Activated T-helper 1 cell treated with anti-CD3 and anti-CD28 coated beads, Interleukin-12 subunit alpha, Interleukin-12 subunit beta, Interleukin-2, Interleukin-4 antibody, amounts not matched to agents 30 ng/mL and 10 ng/mL and 1 ng/mL, durations not matched to agents 14 hours and 24 hours and 36 hours (primary cell): ENCODE measurements at regions of chr9 and their contacts with region 1.

Region 1: GRCh38 chr9:86354011-86354817 is at the start of gene TUT7:
- DNase-seq: peak; percentile 95
- H3K4me3 Mint-ChIP-seq: peak within 1 kb of the TSS; percentile 99
- H3K27ac Mint-ChIP-seq: peak within 1 kb of the TSS; percentile 100
- H3K4me1 Mint-ChIP-seq: peaks cover 41% of the 10 kb centered on the region
- H3K27me3 Mint-ChIP-seq: peaks cover 20% of the 10 kb centered on the region
- total RNA-seq, gene TUT7: 44.1 and 44.5 TPM in 2 replicates

Region 2: DNA sequence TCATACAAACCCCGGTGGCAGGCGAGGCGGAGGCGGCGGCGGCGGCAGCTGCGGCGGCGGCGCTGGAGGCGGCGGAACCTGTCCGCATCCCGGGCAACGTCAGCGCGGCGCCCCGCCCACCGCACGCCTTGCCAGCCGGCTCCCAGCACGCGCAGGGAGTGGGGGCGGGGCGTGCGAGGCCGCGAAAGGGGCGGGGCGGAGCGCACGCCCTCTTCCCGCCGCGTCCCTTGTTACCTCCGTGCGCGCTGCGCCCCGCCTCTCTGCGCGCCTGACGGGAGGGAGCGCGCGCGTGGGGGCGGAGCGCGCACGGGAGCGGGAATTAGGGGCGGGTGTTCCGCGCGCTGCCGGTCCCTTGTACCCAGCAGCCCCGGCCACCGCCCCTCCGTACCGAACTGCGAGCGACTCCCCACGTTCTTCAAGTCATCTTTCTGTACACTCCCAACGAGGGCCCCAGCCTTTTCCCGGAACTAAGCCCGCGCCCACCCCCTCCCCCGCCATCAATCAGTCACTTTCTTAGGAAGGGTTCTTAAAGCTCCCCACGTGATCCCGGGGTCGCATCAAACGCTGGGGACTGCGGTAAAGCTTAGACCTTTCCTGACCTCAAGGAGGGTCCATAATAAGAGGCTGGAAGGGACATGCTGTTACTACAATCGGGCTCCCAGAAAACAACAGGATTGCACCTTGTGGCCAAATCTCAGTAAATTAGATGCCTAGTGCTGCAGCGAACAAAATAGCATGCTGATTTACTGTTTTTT is 612.2 kb before region 1 on chr9 and contains the start of gene AGTPBP1:
- intact Hi-C with region 1: loop called (anchors 1 kb)
- DNase-seq: peak; percentile 94
- H3K4me3 Mint-ChIP-seq: peak within 1 kb of the TSS; percentile 98
- H3K27ac Mint-ChIP-seq: peak within 1 kb of the TSS; percentile 95
- H3K4me1 Mint-ChIP-seq: peaks cover 37% of the 10 kb centered on the region
- H3K27me3 Mint-ChIP-seq: peaks cover 7% of the 10 kb centered on the region
- total RNA-seq, gene AGTPBP1: 23.5 and 26.2 TPM in 2 replicates

Region 3: GRCh38 chr9:86098824-86099700 is 255.2 kb before region 1 on chr9 and contains the start of gene GOLM1:
- intact Hi-C with region 1: loop called (anchors 2 kb)
- DNase-seq: peak; percentile 30
- H3K4me3 Mint-ChIP-seq: peak within 1 kb of the TSS; percentile 95
- H3K27ac Mint-ChIP-seq: peak within 1 kb of the TSS; percentile 89
- H3K4me1 Mint-ChIP-seq: peaks cover 19% of the 10 kb centered on the region
- H3K27me3 Mint-ChIP-seq: peaks cover 48% of the 10 kb centered on the region
- total RNA-seq, gene GOLM1: 8.1 and 10.1 TPM in 2 replicates

Region 4: GRCh38 chr9:86303316-86303975 is 50.8 kb before region 1 on chr9:
- intact Hi-C with region 1: loop called (anchors 5 kb)
- DNase-seq: peak; percentile 43
- H3K4me3 Mint-ChIP-seq: peak overlapping the region; percentile 19
- H3K27ac Mint-ChIP-seq: peak overlapping the region; percentile 71
- H3K4me1 Mint-ChIP-seq: peaks cover 39% of the 10 kb centered on the region
- H3K27me3 Mint-ChIP-seq: no peaks in the 10 kb centered on the region

Region 5: DNA sequence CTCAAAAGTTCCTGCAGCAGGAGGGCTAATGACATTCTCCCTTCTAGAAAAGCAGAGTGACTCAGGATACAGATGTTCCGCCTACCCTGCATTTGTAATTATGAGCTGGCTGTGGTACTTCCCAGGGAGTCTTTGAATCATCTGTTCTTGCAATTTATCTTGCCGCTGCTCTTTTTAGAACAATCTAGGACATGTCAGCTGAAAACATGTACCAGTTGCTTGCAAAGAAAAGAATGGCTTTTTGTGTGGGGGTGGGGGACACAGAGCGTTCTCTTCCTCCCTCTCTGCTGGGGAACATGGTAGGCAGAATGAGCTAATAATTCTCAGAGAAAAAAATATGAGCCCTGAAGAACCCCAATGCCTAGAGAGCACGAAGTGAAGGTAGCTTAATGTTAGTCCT is 51.7 kb after region 1 on chr9:
- intact Hi-C with region 1: loop called (anchors 5 kb)
- DNase-seq: no peak
- H3K4me3 Mint-ChIP-seq: no peak overlapping the region
- H3K27ac Mint-ChIP-seq: peak overlapping the region; percentile 6
- H3K4me1 Mint-ChIP-seq: peaks cover 11% of the 10 kb centered on the region
- H3K27me3 Mint-ChIP-seq: peaks cover 7% of the 10 kb centered on the region

Region 6: GRCh38 chr9:87535817-87536539 is 1181.8 kb after region 1 on chr9:
- intact Hi-C with region 1: loop called (anchors 5 kb)
- DNase-seq: peak; percentile 1
- H3K4me3 Mint-ChIP-seq: no peak overlapping the region
- H3K27ac Mint-ChIP-seq: peak overlapping the region; percentile 88
- H3K4me1 Mint-ChIP-seq: peaks cover 6% of the 10 kb centered on the region
- H3K27me3 Mint-ChIP-seq: no peaks in the 10 kb centered on the region